Testis (tissue), 5 donors: ENCODE measurements at regions of chr11 and their contacts with region 1.

Region 1: DNA sequence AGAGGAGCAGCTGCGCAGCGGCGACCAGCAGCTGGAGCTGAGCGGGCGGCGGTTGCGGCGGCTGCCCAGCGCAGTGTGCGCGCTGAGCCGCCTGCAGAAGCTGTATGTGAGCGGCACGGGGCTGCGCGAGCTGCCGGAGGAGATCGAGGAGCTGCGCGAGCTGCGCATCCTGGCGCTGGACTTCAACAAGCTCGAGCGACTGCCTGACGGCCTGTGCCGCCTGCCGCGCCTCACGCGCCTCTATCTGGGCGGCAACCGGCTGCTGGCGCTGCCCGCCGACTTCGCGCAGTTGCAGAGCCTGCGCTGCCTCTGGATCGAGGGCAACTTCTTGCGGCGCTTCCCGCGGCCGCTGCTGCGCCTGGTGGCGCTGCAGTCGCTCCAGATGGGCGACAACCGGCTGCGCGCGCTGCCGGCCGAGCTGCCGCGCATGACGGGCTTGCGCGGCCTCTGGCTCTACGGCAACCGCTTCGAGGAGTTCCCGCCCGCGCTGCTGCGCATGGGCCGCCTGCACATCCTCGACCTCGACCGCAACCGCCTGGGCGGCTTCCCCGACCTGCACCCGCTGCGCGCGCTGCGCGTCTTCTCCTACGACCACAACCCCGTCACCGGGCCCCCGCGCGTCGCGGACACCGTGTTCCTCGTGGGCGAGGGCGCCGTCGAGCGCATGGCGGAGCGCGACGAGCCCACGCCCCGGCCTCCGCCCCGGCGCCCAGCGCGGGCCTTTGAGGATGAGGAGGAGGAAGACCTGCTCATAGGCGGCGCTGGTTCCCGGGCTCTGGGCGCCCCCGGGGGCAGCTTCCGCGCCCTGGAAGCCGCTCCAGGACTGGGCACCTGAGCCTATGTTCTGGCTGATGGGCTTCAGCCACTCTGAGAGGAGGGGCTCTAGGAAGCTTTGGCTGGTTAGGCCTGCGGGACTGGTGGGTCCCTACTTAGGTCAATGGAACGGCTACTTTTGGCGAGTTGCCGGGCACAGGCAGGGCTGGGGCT is 787 bp downstream of the LRRC10B start:
- DNase-seq: peak; percentile 72
- H3K4me3 ChIP-seq: peak overlapping the region; percentile 6 to 40
- H3K27ac ChIP-seq: peak overlapping the region in 1 of 2 donors; percentile 30
- H3K4me1 ChIP-seq: peaks cover 5% of the 10 kb centered on the region
- H3K27me3 ChIP-seq: no peaks in the 10 kb centered on the region
- CTCF ChIP-seq: peak; percentile 24 to 59 (median 44)
- POLR2A ChIP-seq: no peak

Region 2: DNA sequence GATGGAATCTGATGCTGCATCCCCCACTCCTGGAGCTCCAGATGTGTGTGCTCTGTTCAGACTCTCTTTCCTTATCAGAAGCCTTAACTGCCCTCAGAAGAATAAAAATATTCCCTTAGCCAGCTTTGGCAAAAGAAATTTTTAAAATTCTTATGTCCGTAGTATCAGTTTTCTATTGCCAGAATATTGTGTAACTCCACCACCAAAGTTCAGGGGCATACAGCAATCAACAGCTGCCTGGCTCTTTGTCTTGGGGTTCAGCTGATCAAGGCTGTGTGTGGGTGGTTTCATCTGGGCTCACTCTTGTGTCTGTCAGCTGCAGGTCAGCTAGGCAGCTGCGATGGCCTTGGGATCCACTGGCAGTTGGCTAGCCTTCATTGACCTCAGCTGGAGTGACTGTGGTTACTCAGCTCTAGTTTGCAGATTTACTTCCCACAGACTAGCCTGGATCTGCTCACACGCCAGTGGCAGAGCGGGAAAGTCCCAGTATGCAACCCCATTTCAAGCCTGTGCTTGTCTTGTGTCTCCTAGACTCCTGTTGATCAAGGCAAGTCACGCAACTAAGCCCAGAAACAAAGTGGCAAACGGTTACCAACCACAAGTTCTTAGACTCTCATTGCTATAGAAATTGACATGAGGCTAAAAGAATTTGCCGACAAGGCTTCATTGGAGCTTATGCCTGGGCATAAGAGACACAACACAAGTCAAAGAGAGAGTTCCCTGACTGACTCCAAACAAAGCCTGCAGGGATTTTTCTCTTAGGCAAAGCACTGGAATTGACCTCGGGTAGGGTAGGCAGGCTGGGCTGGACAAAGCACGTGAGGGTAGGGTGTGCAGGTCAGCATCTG is 139.7 kb before region 1 on chr11:
- intact Hi-C with region 1: no loop called
- DNase-seq: peak; percentile 83
- H3K4me3 ChIP-seq: no peak overlapping the region
- H3K27ac ChIP-seq: peak overlapping the region in 1 of 2 donors; percentile 22
- H3K4me1 ChIP-seq: peaks cover 34% of the 10 kb centered on the region
- H3K27me3 ChIP-seq: no peaks in the 10 kb centered on the region
- CTCF ChIP-seq: no peak
- POLR2A ChIP-seq: no peak

Region 3: GRCh38 chr11:61446211-61446651 is 63.1 kb before region 1 on chr11:
- intact Hi-C with region 1: loop called (anchors 10 kb)
- DNase-seq: peak; percentile 94
- H3K4me3 ChIP-seq: no peak overlapping the region
- H3K27ac ChIP-seq: peak overlapping the region in 1 of 2 donors; percentile 18
- H3K4me1 ChIP-seq: peaks cover 6% of the 10 kb centered on the region
- H3K27me3 ChIP-seq: no peaks in the 10 kb centered on the region
- CTCF ChIP-seq: peak; percentile 64 to 75 (median 70)
- POLR2A ChIP-seq: no peak

Region 4: DNA sequence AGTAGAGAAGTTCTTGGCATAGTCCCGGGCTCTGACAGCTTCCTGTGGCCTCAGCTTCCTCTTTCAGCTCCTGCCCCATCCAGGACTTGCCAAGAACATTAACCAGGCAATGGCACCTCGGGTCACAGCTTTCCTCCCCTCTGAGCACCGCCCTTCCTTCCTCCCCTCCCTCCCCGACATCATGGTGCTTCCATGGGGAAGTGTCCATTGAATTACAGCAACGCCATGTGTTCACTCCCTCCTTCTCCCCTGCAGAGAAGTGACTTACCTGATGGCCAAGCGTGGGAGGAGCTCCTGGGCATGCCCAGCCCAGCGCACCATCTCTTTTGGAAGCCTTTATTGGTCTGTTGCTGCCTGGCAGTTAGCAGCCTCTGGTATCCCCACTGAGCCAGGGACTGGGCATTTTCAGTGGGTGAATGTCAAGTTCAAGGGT is 145.1 kb after region 1 on chr11:
- intact Hi-C with region 1: no loop called
- DNase-seq: peak; percentile 23
- H3K4me3 ChIP-seq: no peak overlapping the region
- H3K27ac ChIP-seq: no peak overlapping the region
- H3K4me1 ChIP-seq: no peaks in the 10 kb centered on the region
- H3K27me3 ChIP-seq: no peaks in the 10 kb centered on the region
- CTCF ChIP-seq: no peak
- POLR2A ChIP-seq: no peak

Region 5: GRCh38 chr11:61679893-61680621 is 170.7 kb after region 1 on chr11 and contains the start of gene DAGLA:
- intact Hi-C with region 1: no loop called
- DNase-seq: peak; percentile 83
- H3K4me3 ChIP-seq: peak within 1 kb of the TSS; percentile 53 to 62
- H3K27ac ChIP-seq: peak within 1 kb of the TSS in 1 of 2 donors; percentile 36
- H3K4me1 ChIP-seq: peaks cover 36% of the 10 kb centered on the region
- H3K27me3 ChIP-seq: no peaks in the 10 kb centered on the region
- CTCF ChIP-seq: peak; percentile 96 to 99 (median 97)
- POLR2A ChIP-seq: no peak
- total RNA-seq, gene DAGLA: 7.1 to 8.3 TPM

Region 6: DNA sequence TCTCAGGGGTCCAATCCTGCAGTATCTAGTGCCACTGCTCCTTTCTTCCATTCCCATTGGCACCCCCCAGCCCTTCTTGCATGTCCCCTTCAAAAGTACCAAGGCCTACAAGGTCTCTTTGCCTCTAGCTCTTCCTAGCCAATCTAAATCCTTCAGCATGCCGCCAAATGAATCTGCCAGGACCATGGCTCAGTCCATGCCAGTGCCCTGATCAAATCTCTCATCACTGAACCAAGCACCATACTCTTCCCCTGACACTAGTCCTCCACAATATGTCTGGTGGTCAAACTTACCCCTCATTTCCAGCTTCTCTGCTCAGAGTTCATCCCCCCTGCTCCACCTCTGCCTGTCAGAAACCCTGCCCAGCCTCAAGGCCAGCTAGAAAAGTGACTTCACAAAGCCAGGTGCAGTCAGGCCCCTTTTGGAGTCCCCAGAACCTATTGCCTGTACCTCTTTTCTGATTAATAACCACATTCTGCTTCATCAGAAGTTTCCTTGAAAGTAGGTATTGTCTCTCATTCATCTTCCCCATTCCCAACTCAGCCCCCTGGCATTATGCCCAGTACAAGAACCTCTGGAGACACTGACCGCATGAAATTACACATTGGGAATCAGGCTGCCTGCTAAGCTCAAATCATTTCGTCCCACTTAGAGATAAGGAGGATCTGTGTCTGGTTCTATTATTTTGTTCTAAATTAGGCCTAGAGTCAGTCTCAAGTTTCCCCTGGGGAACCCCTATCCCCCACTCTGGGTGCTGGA is 294.7 kb after region 1 on chr11:
- intact Hi-C with region 1: no loop called
- DNase-seq: no peak
- H3K4me3 ChIP-seq: no peak overlapping the region
- H3K27ac ChIP-seq: no peak overlapping the region
- H3K4me1 ChIP-seq: no peaks in the 10 kb centered on the region
- H3K27me3 ChIP-seq: no peaks in the 10 kb centered on the region
- CTCF ChIP-seq: no peak
- POLR2A ChIP-seq: no peak